AG04449 (cell line): ENCODE measurements at regions of chr12 and their contacts with region 1.

Region 1: DNA sequence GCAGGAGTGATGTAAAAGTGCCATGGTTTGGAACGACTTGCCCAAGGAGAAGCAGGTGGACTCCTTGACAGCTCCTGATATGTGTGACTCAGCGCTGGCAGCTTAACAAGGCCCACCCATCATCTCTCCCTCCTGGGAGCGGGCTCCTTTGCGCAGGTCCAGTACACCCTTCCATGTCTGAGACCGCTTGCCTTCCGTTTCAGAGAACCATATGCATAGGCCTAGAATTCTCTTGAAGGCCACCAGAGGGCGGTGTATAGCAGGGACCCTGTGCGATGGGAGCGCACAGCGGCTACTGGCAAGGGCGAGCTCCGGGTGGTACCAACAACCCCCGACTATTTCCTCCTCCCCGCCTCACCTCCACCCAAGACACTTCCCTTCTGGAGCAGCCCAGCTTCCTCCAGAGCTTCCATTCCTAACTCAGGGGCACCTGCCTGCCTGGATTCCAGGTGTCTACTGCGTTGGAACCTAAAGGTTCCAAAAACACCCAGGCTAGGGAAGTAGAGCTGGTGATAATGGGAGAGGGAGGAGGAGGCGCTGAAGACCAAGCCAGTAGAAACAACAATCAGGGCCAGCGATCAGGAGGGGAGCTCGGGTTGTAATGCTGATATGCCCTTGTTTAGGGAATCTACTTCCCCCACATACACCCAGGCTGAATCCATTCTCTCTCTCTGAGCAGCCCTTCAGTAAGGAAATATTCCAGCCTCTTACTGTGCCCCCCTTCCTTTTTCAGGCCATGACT is 6.2 kb downstream of the DHH start:
- DNase-seq: peak; percentile 41
- H3K4me3 ChIP-seq: no peak overlapping the region
- CTCF ChIP-seq: peak; percentile 87

Region 2: DNA sequence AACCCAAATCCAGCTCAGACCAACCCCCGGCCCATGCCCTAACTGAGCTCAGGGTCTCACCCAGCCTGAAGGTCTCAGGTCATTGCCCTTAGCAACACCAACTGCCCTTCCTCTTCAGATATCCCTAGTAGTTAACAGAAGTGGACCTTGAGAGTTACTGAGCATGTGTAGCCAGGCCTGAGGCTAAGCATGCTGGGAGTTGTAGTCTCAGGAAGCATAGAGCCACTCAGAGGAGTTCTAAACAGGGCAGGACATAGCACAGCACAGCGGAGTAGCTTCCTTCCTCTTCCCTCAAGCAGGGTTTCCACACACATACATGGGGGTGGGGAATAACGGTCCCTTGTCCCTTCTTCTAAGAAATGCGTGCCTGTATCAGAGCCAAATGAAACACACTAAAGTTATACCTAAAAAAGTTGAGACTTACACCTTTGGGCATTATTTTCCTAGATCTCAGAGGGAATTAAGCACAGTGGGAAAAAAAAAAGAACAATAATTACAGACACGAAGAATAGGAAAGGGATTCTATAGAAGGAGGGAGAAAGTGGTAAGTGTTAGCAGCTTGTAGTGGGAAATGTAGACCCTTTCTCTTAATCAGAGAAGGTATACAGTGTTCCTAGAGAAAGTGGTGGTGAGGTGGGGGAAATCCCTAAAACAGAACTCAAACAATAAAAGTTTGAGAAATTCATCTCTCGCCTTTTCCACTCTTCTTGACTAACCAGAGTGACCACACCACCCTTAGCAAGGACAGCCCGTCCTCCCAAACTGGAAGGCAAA is 32.2 kb before region 1 on chr12:
- CTCF ChIA-PET with region 1: interaction called, 372 read pairs
- POLR2A ChIA-PET with region 1: no interaction called
- DNase-seq: peak; percentile 12
- H3K4me3 ChIP-seq: peak overlapping the region; percentile 84
- CTCF ChIP-seq: no peak

Region 3: GRCh38 chr12:49069507-49070346 is 18.6 kb before region 1 on chr12 and contains the start of gene RHEBL1:
- CTCF ChIA-PET with region 1: interaction called, 372 read pairs
- POLR2A ChIA-PET with region 1: no interaction called
- DNase-seq: peak; percentile 54
- H3K4me3 ChIP-seq: peak within 1 kb of the TSS; percentile 77
- CTCF ChIP-seq: no peak

Region 4: GRCh38 chr12:49121047-49121696 is 32.8 kb after region 1 on chr12:
- CTCF ChIA-PET with region 1: interaction called, 114 read pairs
- POLR2A ChIA-PET with region 1: no interaction called
- DNase-seq: no peak
- H3K4me3 ChIP-seq: no peak overlapping the region
- CTCF ChIP-seq: peak; percentile 65

Region 5: GRCh38 chr12:49232940-49233841 is 144.8 kb after region 1 on chr12:
- CTCF ChIA-PET with region 1: interaction called, 99 read pairs
- POLR2A ChIA-PET with region 1: no interaction called
- DNase-seq: no peak
- H3K4me3 ChIP-seq: peak overlapping the region; percentile 1
- CTCF ChIP-seq: peak; percentile 16